Caco-2 (cell line): ENCODE measurements at regions of chr6 and their contacts with region 1.

Region 1: GRCh38 chr6:117602151-117602898 is at the start of gene GOPC:
- DNase-seq: peak; percentile 95 to 97
- H3K4me3 ChIP-seq: peak within 1 kb of the TSS; percentile 63
- H3K4me3 Mint-ChIP-seq: peak within 1 kb of the TSS; percentile 96
- H3K27ac Mint-ChIP-seq: peak within 1 kb of the TSS; percentile 94
- H3K4me1 ChIP-seq: peaks cover 7% of the 10 kb centered on the region; the same call in 1 of the 2 replicates
- H3K4me1 Mint-ChIP-seq: no peaks in the 10 kb centered on the region
- H3K27me3 ChIP-seq: no peaks in the 10 kb centered on the region
- H3K27me3 Mint-ChIP-seq: no peaks in the 10 kb centered on the region
- CTCF ChIP-seq: peak; percentile 23 to 45
- total RNA-seq, gene GOPC: 29.0 and 29.6 TPM in 2 replicates

Region 2: GRCh38 chr6:117352466-117353081 is 249.8 kb before region 1 on chr6:
- CTCF ChIA-PET with region 1: no interaction called
- POLR2A ChIA-PET with region 1: no interaction called
- intact Hi-C with region 1: loop called (anchors 1 kb)
- DNase-seq: peak in 1 of 2 experiments; percentile 29
- H3K4me3 ChIP-seq: no peak overlapping the region
- H3K4me3 Mint-ChIP-seq: no peak overlapping the region
- H3K27ac Mint-ChIP-seq: no peak overlapping the region
- H3K4me1 ChIP-seq: no peaks in the 10 kb centered on the region
- H3K4me1 Mint-ChIP-seq: peaks cover 7% of the 10 kb centered on the region
- H3K27me3 ChIP-seq: no peaks in the 10 kb centered on the region
- H3K27me3 Mint-ChIP-seq: peaks cover 6% of the 10 kb centered on the region
- CTCF ChIP-seq: peak; percentile 60

Region 3: DNA sequence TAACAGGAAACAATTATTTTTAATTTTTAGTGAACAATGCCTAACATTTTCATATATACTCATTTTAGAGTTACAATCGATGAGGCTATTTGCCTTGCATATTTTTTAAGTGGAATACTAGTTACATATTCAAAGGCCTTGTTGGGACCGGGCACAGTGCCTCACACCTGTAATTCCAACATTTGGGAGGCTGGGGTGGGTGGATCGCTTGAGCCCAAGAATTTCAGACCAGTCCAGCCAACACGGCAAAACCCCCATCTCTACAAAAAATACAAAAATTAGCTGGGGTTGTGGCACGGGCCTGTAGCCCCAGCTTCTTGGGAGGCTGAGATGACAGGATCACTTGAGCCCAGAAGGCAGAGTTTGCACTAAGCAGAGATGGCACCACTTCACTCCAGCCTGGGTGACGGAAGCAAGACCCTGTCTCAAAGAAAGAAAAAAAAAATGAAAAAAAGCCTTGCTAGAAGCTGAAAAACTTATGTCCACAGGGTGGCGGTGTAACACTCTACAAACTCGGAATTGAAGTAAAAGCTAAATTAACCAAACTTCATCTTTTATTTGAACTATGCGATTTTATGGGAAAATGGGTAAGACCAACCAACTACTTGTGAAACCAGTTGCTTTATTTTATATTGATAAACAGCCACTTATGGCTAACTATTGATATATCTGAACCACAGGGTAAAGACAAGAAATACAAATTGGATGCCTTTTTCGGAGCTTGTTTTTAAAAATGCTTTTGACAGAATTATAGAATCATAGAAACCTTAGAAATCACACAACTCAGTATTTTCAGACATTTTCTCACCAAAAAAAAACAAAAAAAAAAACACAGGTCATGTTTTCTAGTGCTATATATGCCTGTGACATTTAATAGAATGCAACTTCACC is 152.5 kb before region 1 on chr6:
- CTCF ChIA-PET with region 1: interaction called, 8 read pairs
- POLR2A ChIA-PET with region 1: interaction called, 9 read pairs
- intact Hi-C with region 1: loop called (anchors 1 kb)
- DNase-seq: peak; percentile 44 to 67
- H3K4me3 ChIP-seq: no peak overlapping the region
- H3K4me3 Mint-ChIP-seq: no peak overlapping the region
- H3K27ac Mint-ChIP-seq: no peak overlapping the region
- H3K4me1 ChIP-seq: 0 out of 2 replicates have a peak, but pooled peaks cover 4% of the 10 kb centered on the region
- H3K4me1 Mint-ChIP-seq: peaks cover 14% of the 10 kb centered on the region
- H3K27me3 ChIP-seq: no peaks in the 10 kb centered on the region; the same call in 1 of the 2 replicates
- H3K27me3 Mint-ChIP-seq: peaks cover 3% of the 10 kb centered on the region
- CTCF ChIP-seq: peak; percentile 57 to 59

Region 4: GRCh38 chr6:117591405-117591804 is 10.9 kb before region 1 on chr6:
- CTCF ChIA-PET with region 1: no interaction called
- POLR2A ChIA-PET with region 1: interaction called, 13 read pairs
- intact Hi-C with region 1: loop called (anchors 1 kb)
- DNase-seq: peak; percentile 34 to 65
- H3K4me3 ChIP-seq: no peak overlapping the region
- H3K4me3 Mint-ChIP-seq: peak overlapping the region; percentile 15
- H3K27ac Mint-ChIP-seq: peak overlapping the region; percentile 39
- H3K4me1 ChIP-seq: peaks cover 24% of the 10 kb centered on the region
- H3K4me1 Mint-ChIP-seq: peaks cover 14% of the 10 kb centered on the region
- H3K27me3 ChIP-seq: no peaks in the 10 kb centered on the region
- H3K27me3 Mint-ChIP-seq: no peaks in the 10 kb centered on the region
- CTCF ChIP-seq: no peak

Region 5: GRCh38 chr6:117829594-117830319 is 227.4 kb after region 1 on chr6:
- CTCF ChIA-PET with region 1: no interaction called
- POLR2A ChIA-PET with region 1: no interaction called
- intact Hi-C with region 1: loop called (anchors 2 kb)
- DNase-seq: peak in 1 of 2 experiments; percentile 41
- H3K4me3 ChIP-seq: peak overlapping the region; percentile 9; the same call in 1 of the 2 replicates
- H3K4me3 Mint-ChIP-seq: peak overlapping the region; percentile 62
- H3K27ac Mint-ChIP-seq: no peak overlapping the region
- H3K4me1 ChIP-seq: no peaks in the 10 kb centered on the region
- H3K4me1 Mint-ChIP-seq: no peaks in the 10 kb centered on the region
- H3K27me3 ChIP-seq: no peaks in the 10 kb centered on the region
- H3K27me3 Mint-ChIP-seq: peaks cover 5% of the 10 kb centered on the region
- CTCF ChIP-seq: peak; percentile 52 to 56